Calu3 (cell line): ENCODE measurements at regions of chr6 and their contacts with region 1.

Region 1: DNA sequence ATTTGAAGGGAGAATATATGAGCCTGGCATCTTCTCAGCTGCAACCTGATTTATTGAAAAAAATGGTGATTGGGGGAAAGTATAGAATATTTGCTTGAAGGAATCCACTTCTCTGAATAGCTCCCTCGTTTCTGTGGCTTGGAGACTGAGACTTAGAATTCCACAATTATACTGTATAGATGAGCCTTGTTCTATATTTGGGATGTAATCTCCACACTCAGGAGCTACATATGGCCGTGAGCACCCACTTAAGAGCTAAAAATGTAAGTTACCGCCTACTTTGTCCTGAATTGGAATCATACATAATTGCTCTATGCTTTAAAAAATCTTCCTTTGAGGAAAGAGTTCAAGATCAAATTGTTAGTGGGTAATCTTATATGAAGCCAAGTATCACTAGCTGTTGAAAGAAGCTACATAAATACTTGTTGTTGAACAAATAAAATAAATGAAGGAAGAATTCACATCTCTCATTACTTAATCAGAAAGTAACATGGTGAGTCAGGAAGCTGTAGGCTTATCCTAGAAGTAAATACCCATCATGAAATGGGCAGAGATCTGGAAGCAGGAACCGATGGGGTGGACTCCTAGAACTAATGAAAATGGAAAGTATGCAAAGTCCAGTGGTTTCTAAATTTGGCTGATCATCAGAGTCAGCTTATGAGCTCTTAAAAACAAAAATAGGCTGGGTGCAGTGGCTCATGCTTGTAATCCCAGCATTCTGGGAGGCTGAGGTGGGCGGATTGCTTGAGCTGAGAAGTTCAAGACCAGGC is 254.3 kb downstream of the SOX4 start:
- DNase-seq: no peak
- H3K4me3 Mint-ChIP-seq: no peak overlapping the region
- H3K27ac Mint-ChIP-seq: peak overlapping the region; percentile 57
- H3K4me1 Mint-ChIP-seq: peaks cover 43% of the 10 kb centered on the region
- H3K27me3 Mint-ChIP-seq: no peaks in the 10 kb centered on the region
- CTCF ChIP-seq: no peak

Region 2: DNA sequence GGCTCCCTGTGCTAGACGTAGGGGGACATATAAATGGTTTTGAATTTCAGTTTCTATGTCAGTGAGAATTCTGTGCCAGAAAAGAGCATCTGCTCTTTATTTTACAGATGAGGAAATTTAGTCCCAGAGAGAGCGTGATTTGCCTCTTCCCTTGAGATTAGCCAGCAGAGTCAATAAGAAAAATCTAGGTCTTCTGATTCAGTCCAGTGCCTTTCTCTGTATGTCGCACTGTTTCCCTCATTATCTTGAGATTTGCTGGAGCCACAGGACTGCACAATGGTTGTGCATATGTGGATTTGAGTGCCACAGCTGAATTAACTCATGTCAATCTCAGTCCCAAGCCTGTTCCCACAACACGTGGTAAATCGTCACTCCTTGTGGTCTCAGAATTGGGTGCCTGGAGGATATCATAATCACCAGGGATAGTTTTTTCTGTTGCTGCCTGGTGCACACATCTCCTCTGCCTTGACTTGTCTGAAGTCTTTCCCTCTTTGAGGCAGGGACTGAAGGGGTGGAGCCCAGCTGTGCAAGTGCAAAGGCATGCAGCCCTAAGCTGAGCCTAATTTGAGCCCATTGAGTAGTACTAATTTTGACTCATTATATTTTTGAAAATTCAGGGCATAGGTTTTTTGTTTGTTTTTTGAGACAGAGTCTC is 22.3 kb after region 1 on chr6:
- CTCF ChIA-PET with region 1: interaction called, 10 read pairs
- intact Hi-C with region 1: no loop called
- DNase-seq: no peak
- H3K4me3 Mint-ChIP-seq: no peak overlapping the region
- H3K27ac Mint-ChIP-seq: no peak overlapping the region
- H3K4me1 Mint-ChIP-seq: no peaks in the 10 kb centered on the region
- H3K27me3 Mint-ChIP-seq: no peaks in the 10 kb centered on the region
- CTCF ChIP-seq: no peak